IMR-90 (cell line): ENCODE measurements at regions of chr18 and their contacts with region 1.

Region 1: DNA sequence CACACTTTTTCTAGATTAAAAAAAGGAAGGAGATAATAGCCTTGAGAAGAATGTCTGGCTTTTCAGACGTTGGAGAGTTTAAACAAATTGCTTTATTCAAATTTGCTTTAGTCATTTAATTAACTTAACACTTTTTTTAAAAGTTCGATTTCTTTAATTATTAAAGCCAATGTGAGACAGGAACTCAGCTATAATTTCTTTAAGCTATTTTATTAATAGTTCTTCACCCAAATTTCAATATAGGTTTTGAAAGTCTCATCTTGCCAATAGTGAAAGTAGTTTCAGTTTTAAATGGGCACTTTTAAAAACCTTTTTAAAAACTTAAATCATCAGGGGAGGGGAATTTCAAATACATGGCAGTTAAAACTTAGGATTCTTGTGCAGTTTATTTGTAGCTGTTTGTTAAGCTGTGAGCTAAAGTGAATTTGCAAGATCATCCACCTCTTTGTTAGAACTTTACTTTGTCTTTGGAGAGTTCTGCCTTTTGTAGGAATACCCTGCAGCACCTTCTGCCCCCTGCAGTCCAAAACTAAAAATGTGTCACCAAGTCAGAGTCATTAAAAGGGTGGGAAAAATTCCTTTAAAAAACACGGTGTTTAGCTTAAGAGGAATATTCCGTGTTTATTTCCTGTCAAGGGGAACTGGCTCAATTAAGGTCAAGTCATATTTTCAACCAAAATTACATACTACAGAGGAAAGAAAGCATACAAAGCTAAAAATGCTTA is 4.6 kb downstream of the TGIF1 start:
- DNase-seq: peak; percentile 72
- ATAC-seq: no peak
- H3K4me3 ChIP-seq: peak overlapping the region; percentile 85
- H3K27ac ChIP-seq: peak overlapping the region; percentile 30; the same call in 1 of the 2 replicates
- H3K4me1 ChIP-seq: peaks cover 16% of the 10 kb centered on the region
- H3K27me3 ChIP-seq: no peaks in the 10 kb centered on the region
- CTCF ChIP-seq: peak; percentile 60
- POLR2A ChIP-seq: no peak
- RAD21 ChIP-seq: peak; percentile 40; the same call in 1 of the 2 replicates

Region 2: GRCh38 chr18:3074087-3074486 is 380.4 kb before region 1 on chr18:
- CTCF ChIA-PET with region 1: no interaction called
- POLR2A ChIA-PET with region 1: interaction called, 13 read pairs
- dilution Hi-C with region 1: no loop called
- in situ Hi-C with region 1: no loop called
- intact Hi-C with region 1: no loop called
- DNase-seq: no peak
- ATAC-seq: no peak
- H3K4me3 ChIP-seq: no peak overlapping the region
- H3K27ac ChIP-seq: no peak overlapping the region
- H3K4me1 ChIP-seq: no peaks in the 10 kb centered on the region
- H3K27me3 ChIP-seq: no peaks in the 10 kb centered on the region
- CTCF ChIP-seq: no peak
- POLR2A ChIP-seq: no peak
- RAD21 ChIP-seq: no peak

Region 3: GRCh38 chr18:3585656-3586509 is 131.4 kb after region 1 on chr18:
- CTCF ChIA-PET with region 1: interaction called, 6 read pairs
- POLR2A ChIA-PET with region 1: no interaction called
- dilution Hi-C with region 1: no loop called
- in situ Hi-C with region 1: no loop called
- intact Hi-C with region 1: loop called (anchors 2 kb)
- DNase-seq: peak; percentile 78
- ATAC-seq: peak; percentile 91
- H3K4me3 ChIP-seq: no peak overlapping the region
- H3K27ac ChIP-seq: no peak overlapping the region
- H3K4me1 ChIP-seq: peaks cover 5% of the 10 kb centered on the region
- H3K27me3 ChIP-seq: no peaks in the 10 kb centered on the region
- CTCF ChIP-seq: peak; percentile 68
- POLR2A ChIP-seq: no peak
- RAD21 ChIP-seq: peak; percentile 71

Region 4: DNA sequence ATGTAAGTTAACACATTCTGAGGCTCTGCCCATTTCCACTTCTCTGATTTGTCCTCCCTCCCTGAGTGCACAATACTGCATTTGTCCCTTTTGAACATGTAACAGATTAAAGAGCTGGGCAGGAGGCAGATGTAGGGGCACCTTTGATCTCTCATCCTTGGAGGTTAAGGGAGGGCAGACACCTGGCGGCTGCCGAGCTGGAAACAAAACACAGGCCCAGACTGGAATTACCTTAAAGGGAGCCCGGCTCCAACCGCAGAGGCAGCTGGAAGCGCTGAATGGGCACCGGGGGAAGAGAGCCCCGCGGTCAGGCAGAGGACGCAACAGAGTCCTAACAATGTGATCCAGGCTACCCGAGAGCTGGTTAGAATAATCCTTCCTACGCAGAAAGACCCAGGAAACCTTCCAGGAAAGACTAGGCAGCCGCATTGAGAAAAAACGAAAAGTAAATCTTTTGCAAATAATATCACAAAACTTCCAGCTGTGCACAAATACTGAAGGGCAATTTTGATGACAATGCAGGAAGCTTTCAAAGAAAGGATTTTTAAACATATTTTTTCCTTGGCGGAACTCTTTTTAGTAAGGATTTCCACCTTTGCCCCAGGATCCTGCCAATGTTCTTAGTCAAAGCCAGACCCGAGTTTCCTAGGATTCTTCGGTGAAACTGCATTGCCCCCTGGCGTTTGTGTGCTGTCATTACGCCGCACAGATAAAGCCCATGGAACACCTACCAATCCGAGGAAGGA is 211.4 kb after region 1 on chr18:
- CTCF ChIA-PET with region 1: interaction called, 13 read pairs
- POLR2A ChIA-PET with region 1: interaction called, 6 read pairs
- dilution Hi-C with region 1: no loop called
- in situ Hi-C with region 1: loop called (anchors 5 kb)
- intact Hi-C with region 1: loop called (anchors 1 kb)
- DNase-seq: peak; percentile 91
- ATAC-seq: peak; percentile 96
- H3K4me3 ChIP-seq: no peak overlapping the region
- H3K27ac ChIP-seq: peak overlapping the region; percentile 72
- H3K4me1 ChIP-seq: peaks cover 7% of the 10 kb centered on the region
- H3K27me3 ChIP-seq: no peaks in the 10 kb centered on the region
- CTCF ChIP-seq: peak; percentile 94
- POLR2A ChIP-seq: no peak
- RAD21 ChIP-seq: peak; percentile 99

Region 5: DNA sequence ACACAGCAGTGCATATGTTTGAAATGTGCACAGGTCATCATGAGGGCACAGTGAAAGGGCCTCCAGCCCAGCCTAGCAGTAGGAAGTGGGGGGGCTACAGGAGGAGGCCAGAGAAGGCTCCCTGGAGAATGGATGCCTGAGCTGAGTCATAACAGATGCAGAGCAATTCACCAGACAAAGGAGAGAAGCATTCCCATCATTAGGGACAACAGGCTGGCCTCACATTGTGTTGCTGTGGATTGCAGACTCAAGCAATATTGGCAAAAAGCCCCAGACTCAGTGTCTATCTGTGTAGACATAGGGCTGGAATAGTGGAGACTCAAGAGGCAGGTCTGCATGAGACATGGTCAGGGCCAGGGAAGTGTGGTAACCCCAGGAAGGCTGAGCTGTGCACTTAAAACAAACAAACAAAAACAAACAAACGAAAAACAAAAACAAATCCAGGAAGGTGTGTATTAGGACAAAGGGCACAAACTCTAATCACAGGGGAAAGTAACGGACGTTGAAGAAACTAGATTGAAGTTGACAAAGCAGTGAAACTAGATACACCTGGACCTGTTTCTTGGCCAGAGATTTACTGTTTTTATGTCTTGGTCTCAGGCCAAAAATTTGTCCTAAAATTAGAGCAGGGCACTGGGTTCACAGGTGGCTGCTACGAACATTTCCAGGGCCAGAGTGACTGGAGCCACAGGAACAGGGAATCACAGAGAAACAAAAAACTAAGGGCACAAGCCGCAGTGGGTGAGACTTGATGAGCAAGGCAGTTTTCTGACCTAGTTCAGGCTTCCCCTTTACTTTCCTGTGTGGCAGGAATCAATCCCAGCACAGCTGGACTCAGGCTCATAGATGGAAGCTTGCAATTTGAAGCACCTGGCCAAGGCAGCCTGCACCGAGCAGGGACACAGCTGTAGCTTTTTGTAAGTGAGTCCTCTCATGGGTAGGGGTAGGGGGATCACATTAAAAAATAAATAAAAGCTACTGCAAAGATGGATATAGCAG is 671.0 kb after region 1 on chr18:
- CTCF ChIA-PET with region 1: no interaction called
- POLR2A ChIA-PET with region 1: no interaction called
- dilution Hi-C with region 1: no loop called
- in situ Hi-C with region 1: no loop called
- intact Hi-C with region 1: no loop called
- DNase-seq: no peak
- ATAC-seq: no peak
- H3K4me3 ChIP-seq: no peak overlapping the region
- H3K27ac ChIP-seq: no peak overlapping the region
- H3K4me1 ChIP-seq: no peaks in the 10 kb centered on the region
- H3K27me3 ChIP-seq: no peaks in the 10 kb centered on the region
- CTCF ChIP-seq: no peak
- POLR2A ChIP-seq: no peak
- RAD21 ChIP-seq: no peak